Heart left ventricle (tissue), 16 donors: ENCODE measurements at regions of chr5 and their contacts with region 1.

Region 1: DNA sequence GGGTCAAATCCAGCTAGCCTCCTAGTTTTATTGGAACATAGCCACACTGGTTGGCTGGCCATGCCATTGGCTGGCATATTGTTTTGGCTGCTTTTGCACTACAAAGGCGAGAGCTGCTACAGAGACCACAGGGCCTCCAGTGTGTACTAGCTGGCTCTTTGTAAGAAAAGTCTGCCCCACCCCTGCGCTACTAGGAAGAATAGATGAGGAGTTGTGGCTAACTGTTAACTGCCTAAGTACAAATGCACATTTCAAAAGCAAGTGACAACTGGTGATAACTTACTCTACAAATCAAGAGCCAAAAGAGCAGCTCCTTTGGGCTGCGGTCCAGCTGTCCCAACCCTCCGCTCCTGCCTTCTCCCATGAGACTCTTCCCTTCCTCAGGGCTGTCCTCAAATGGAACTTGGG is 63.9 kb downstream of the SERINC5 start:
- DNase-seq: peak; percentile 55 to 73 (median 62)
- ATAC-seq: peak; percentile 44 to 73 (median 64)
- H3K4me3 ChIP-seq: peak overlapping the region in 5 of 12 donors; percentile 1 to 22 (median 9)
- H3K27ac ChIP-seq: peak overlapping the region; percentile 67 to 90 (median 80)
- H3K4me1 ChIP-seq: peaks cover 0 to 76% (median 55%) of the 10 kb centered on the region in 12 donors
- H3K27me3 ChIP-seq: no peaks in the 10 kb centered on the region
- CTCF ChIP-seq: no peak
- POLR2A ChIP-seq: no peak

Region 2: GRCh38 chr5:80216753-80217596 is 25.0 kb after region 1 on chr5:
- intact Hi-C with region 1: loop called in 1 of 10 experiments (anchors 2 kb)
- DNase-seq: peak; percentile 72 to 90 (median 84)
- ATAC-seq: peak; percentile 96 to 97 (median 96)
- H3K4me3 ChIP-seq: peak overlapping the region in 5 of 12 donors; percentile 3 to 34 (median 25)
- H3K27ac ChIP-seq: peak overlapping the region; percentile 32 to 83 (median 65)
- H3K4me1 ChIP-seq: peaks cover 0 to 73% (median 32%) of the 10 kb centered on the region in 12 donors
- H3K27me3 ChIP-seq: no peaks in the 10 kb centered on the region
- CTCF ChIP-seq: no peak
- POLR2A ChIP-seq: no peak

Region 3: DNA sequence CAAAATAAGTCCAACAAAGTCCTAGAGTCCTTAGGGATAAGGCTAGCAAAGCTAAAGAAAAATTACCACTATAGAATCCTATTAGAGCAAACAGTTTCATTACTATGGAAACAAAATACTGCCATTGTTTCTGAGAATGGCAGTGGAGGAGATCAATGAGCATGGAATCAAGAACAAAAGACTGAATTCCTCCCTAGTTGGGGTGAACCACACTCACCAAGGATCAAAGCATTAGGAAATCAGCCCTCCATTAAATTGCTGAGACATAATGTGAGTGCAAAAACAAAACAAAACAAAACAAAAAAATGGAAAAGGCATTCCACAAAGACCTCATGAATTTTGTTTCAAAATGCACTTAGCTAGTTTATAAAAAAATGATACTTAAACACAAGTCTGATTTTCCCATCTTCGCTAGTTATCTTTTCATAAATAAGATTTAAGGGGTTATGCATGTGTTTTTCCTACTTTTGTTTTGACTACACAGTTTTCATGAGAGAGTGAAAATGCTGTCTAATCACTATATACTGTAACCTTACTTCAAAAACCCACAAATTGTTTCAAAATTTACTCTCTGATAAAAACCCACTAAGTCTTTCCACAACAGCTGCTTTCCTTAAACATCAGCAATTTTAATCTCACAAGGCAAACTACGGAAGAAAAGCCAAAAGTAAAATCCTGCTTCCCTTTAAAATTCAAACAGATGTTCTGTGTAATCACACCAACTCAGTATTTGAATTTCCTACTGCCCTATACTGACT is 54.2 kb after region 1 on chr5:
- intact Hi-C with region 1: loop called in 5 of 10 experiments (anchors 10 kb)
- DNase-seq: no peak
- ATAC-seq: peak in 2 of 4 donors; percentile 43 to 57
- H3K4me3 ChIP-seq: peak overlapping the region in 1 of 12 donors; percentile 14
- H3K27ac ChIP-seq: peak overlapping the region in 10 of 12 donors; percentile 20 to 76 (median 68)
- H3K4me1 ChIP-seq: peaks cover 3 to 42% (median 30%) of the 10 kb centered on the region in 12 donors
- H3K27me3 ChIP-seq: no peaks in the 10 kb centered on the region
- CTCF ChIP-seq: no peak
- POLR2A ChIP-seq: no peak